ENCODE measurements at regions of chr1 and their contacts with region 1.

Region 1: DNA sequence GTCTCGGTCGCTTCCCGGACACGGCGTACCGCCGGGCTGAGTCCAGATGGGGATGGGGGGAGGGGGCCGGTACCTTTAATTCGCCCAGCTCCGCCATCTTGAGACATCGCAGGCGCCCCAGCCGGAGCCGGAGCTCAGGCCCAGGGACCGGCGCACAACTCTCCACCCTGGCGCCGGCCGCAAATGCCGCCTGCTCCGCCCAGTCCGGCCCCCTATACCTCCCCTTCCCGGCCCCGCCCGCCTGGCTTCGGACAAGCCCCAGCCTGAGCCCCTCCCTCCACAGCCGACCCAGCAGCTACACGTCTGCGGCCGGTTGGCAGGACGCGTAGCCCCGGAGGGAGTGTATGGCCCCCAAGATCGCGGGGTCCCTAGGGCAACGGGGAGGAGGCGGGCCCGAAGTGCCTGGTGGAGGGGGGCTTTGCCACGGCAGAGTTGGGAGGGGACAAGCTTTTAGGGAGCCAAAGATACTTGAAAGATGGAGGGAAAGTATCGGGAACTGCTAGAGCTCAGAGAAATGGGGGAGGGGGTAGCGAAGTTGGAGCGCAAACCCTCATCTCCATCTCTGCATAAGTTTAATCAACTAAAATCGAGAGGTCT is at the start of gene PIAS3:
- DNase-seq: peak; percentile 93
- ATAC-seq: peak; percentile 86
- H3K4me3 Mint-ChIP-seq: peak within 1 kb of the TSS; percentile 90
- H3K27ac Mint-ChIP-seq: peak within 1 kb of the TSS; percentile 79
- H3K4me1 Mint-ChIP-seq: peaks cover 12% of the 10 kb centered on the region
- H3K27me3 Mint-ChIP-seq: no peaks in the 10 kb centered on the region
- total RNA-seq, gene PIAS3: 20.0 to 22.0 TPM

Region 2: DNA sequence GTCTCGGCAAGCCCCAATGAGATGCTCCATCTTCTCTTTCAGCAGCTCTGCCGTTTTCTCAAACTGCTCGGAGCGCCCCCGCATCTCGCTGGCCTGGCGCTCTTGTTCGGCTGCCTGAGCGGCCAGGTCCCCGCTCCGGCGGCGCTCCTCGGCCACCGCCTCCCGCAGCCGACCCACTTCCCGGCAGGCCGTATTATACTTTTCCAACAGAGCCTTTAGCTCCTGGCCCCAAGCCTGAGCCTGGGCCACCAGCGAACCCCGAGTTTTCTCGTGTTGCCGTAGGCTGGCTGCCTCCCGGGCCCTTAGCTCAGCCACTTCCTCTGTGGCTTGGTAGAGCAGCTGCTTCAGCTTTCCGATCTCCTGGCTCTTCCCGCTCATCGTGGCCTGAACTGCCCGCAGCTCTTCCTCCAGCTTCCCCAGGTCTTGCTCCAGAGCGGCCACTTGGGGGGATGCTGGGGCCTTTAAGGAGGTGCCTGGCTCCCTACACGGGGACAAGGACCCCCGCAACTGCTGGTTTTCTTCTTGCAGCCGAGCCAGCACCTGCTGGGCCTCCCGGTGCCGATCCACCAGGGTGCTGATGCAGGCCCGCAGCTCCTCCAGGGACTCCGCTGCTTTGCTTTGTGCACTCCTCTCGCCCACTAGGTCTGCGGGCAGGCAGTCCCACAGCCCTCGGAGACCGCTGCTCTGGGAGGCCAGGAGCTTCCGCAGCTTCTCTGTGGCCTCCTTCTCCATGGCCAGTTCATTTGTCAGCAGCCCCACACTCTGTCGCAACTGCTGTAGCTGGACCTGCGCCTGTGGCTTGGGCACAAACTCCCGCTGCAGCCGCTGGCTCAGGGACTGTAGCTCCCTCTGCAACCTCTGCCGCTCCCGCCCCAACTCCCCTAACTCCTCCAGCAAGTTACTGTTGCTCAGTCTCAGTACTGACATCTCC is 13.3 kb after region 1 on chr1:
- CTCF ChIA-PET with region 1: interaction called, 5 read pairs
- POLR2A ChIA-PET with region 1: interaction called, 10 read pairs
- intact Hi-C with region 1: loop called (anchors 1 kb)
- DNase-seq: peak; percentile 58
- ATAC-seq: peak; percentile 81
- H3K4me3 Mint-ChIP-seq: peak overlapping the region; percentile 63
- H3K27ac Mint-ChIP-seq: peak overlapping the region; percentile 61
- H3K4me1 Mint-ChIP-seq: peaks cover 11% of the 10 kb centered on the region
- H3K27me3 Mint-ChIP-seq: peaks cover 10% of the 10 kb centered on the region

Region 3: GRCh38 chr1:145885738-145886287 is 26.8 kb after region 1 on chr1 and contains the start of gene ANKRD35:
- CTCF ChIA-PET with region 1: interaction called, 4 read pairs
- POLR2A ChIA-PET with region 1: interaction called, 8 read pairs
- intact Hi-C with region 1: loop called (anchors 1 kb)
- DNase-seq: peak; percentile 92
- ATAC-seq: peak; percentile 100
- H3K4me3 Mint-ChIP-seq: peak within 1 kb of the TSS; percentile 72
- H3K27ac Mint-ChIP-seq: no peak within 1 kb of the TSS
- H3K4me1 Mint-ChIP-seq: peaks cover 14% of the 10 kb centered on the region
- H3K27me3 Mint-ChIP-seq: peaks cover 17% of the 10 kb centered on the region
- total RNA-seq, gene ANKRD35: 0.30 to 0.55 TPM

Region 4: GRCh38 chr1:145927063-145927886 is 68.3 kb after region 1 on chr1 and contains the start of gene RBM8A:
- CTCF ChIA-PET with region 1: interaction called, 3 read pairs
- POLR2A ChIA-PET with region 1: interaction called, 15 read pairs
- intact Hi-C with region 1: loop called (anchors 2 kb)
- DNase-seq: peak; percentile 96
- ATAC-seq: peak; percentile 97
- H3K4me3 Mint-ChIP-seq: no peak within 1 kb of the TSS
- H3K27ac Mint-ChIP-seq: no peak within 1 kb of the TSS
- H3K4me1 Mint-ChIP-seq: peaks cover 28% of the 10 kb centered on the region
- H3K27me3 Mint-ChIP-seq: no peaks in the 10 kb centered on the region
- total RNA-seq, gene RBM8A: 293 to 330 TPM

Region 5: GRCh38 chr1:145963995-145964901 is 105.3 kb after region 1 on chr1 and contains the starts of genes ANKRD34A and POLR3GL:
- CTCF ChIA-PET with region 1: interaction called, 5 read pairs
- POLR2A ChIA-PET with region 1: interaction called, 10 read pairs
- intact Hi-C with region 1: loop called (anchors 1 kb)
- DNase-seq: peak; percentile 95
- ATAC-seq: peak; percentile 88
- H3K4me3 Mint-ChIP-seq: peak within 1 kb of the TSS; percentile 85
- H3K27ac Mint-ChIP-seq: peak within 1 kb of the TSS; percentile 87
- H3K4me1 Mint-ChIP-seq: peaks cover 33% of the 10 kb centered on the region
- H3K27me3 Mint-ChIP-seq: no peaks in the 10 kb centered on the region
- total RNA-seq, gene ANKRD34A: 5.8 to 6.1 TPM
- total RNA-seq, gene POLR3GL: 19.3 to 22.4 TPM

Region 6: DNA sequence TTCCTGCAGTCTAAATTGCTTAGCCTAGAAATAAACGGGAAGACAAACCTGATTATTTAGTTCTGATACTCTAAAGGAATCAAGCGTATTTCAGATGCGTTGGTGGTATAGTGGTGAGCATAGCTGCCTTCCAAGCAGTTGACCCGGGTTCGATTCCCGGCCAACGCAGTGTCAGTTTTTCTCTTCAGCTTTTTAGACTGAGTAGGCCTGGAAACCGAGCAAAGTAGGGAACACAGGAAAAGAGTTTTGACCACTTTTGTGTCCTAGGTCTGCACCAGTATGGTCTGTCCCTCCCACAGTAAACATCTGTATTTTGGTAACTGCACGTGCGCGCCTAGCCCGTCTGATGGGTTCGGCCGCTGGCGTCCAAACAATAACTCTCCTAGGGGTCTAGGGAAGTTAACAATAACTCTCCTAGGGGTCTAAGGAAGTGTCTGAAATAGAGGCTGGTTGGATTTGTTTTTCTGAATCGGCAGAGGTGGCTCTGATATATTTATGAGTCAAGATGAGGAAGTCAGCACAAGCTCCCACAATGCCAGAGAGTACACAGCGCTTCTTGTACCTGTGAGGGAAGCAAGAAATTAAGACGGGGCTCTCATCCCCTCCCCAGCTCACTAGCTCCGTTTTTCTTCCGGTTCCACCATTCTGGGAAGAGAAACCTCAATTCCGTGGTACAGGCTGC is 178.1 kb after region 1 on chr1:
- CTCF ChIA-PET with region 1: interaction called, 4 read pairs
- POLR2A ChIA-PET with region 1: interaction called, 3 read pairs
- intact Hi-C with region 1: loop called in 1 of 2 experiments (anchors 1 kb)
- DNase-seq: peak; percentile 91
- ATAC-seq: peak; percentile 45
- H3K4me3 Mint-ChIP-seq: peak overlapping the region; percentile 95
- H3K27ac Mint-ChIP-seq: peak overlapping the region; percentile 98
- H3K4me1 Mint-ChIP-seq: peaks cover 36% of the 10 kb centered on the region
- H3K27me3 Mint-ChIP-seq: peaks cover 2% of the 10 kb centered on the region